ENCODE measurements at regions of chr3 and their contacts with region 1.

Region 1: GRCh38 chr3:115147329-115148141 is 447 bp upstream of the ZBTB20 start:
- DNase-seq: peak; percentile 81
- ATAC-seq: peak; percentile 77
- H3K4me3 Mint-ChIP-seq: peak overlapping the region; percentile 94
- H3K27ac Mint-ChIP-seq: peak overlapping the region; percentile 98
- H3K4me1 Mint-ChIP-seq: peaks cover 34% of the 10 kb centered on the region
- H3K27me3 Mint-ChIP-seq: no peaks in the 10 kb centered on the region
- CTCF ChIP-seq: no peak

Region 2: GRCh38 chr3:113696658-113697499 is 1450.7 kb before region 1 on chr3:
- CTCF ChIA-PET with region 1: no interaction called
- POLR2A ChIA-PET with region 1: no interaction called
- intact Hi-C with region 1: loop called (anchors 1 kb)
- DNase-seq: peak; percentile 95
- ATAC-seq: peak; percentile 89
- H3K4me3 Mint-ChIP-seq: no peak overlapping the region
- H3K27ac Mint-ChIP-seq: no peak overlapping the region
- H3K4me1 Mint-ChIP-seq: peaks cover 29% of the 10 kb centered on the region
- H3K27me3 Mint-ChIP-seq: no peaks in the 10 kb centered on the region
- CTCF ChIP-seq: no peak

Region 3: GRCh38 chr3:114519415-114519814 is 628.1 kb before region 1 on chr3:
- CTCF ChIA-PET with region 1: no interaction called
- POLR2A ChIA-PET with region 1: no interaction called
- intact Hi-C with region 1: loop called (anchors 2 kb)
- DNase-seq: peak; percentile 21
- ATAC-seq: peak; percentile 97
- H3K4me3 Mint-ChIP-seq: no peak overlapping the region
- H3K27ac Mint-ChIP-seq: no peak overlapping the region
- H3K4me1 Mint-ChIP-seq: no peaks in the 10 kb centered on the region
- H3K27me3 Mint-ChIP-seq: no peaks in the 10 kb centered on the region
- CTCF ChIP-seq: no peak

Region 4: DNA sequence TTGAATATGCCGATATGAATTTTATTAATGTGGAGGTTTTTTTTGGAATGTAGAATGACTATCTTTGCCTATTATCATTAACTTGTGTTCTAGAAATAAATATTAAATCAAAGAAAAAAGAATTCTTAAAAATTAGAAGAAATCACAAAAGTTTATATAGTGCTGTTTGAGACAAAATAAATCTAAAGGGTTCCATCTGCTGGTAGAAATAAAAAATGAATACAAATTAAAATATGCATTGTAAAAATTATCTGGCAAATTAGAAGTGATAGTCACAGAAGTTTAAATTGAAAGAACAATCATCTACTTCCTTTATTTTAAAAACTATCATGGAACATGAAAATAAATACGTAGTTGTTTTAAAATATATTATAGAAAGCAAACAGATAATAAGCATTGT is 22.3 kb after region 1 on chr3:
- CTCF ChIA-PET with region 1: no interaction called
- POLR2A ChIA-PET with region 1: interaction called, 18 read pairs
- intact Hi-C with region 1: loop called (anchors 2 kb)
- DNase-seq: no peak
- ATAC-seq: no peak
- H3K4me3 Mint-ChIP-seq: no peak overlapping the region
- H3K27ac Mint-ChIP-seq: no peak overlapping the region
- H3K4me1 Mint-ChIP-seq: peaks cover 7% of the 10 kb centered on the region
- H3K27me3 Mint-ChIP-seq: no peaks in the 10 kb centered on the region
- CTCF ChIP-seq: no peak

Region 5: DNA sequence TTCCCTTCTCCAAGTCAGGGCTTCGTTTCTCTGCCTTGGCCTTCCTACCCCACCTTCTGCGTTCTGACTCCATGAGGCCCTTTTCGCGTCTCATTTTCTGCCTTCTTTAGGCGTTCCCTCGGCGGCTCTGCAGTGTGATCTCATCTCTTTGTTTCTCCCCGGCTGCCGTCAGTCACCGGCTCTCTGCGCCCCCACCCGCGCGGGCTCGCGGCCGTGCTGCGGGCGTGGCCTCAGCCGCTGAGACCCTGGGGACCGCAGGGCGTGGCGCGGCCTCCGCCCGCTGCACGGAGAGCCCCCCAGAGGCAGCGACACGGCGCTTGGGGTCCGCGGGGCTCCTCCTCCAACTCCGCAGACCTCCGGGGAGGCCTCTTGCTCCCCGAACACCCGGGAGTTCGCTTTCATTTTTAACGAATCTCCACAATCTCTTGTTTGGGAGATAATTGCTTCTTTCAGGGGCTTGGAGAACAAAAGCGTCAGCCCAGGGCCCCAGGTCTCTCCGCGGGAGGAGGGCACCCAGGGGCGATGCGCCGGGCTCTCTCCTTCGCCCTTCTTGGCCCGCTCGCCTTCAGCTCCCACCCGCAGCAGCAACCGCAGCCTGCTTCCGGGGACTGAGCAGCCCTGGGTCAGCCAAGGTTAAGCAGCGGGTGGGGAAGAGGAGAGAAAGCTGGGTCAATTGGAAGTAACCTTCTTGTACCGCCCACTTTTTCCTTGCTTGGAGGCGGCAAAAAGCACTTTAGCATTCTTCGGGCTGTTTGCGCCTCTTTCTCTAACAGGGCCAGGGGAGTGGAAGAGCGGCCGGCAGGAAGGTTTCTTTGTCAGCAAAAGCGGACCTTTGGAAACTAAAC is 511.0 kb after region 1 on chr3:
- CTCF ChIA-PET with region 1: no interaction called
- POLR2A ChIA-PET with region 1: interaction called, 7 read pairs
- intact Hi-C with region 1: loop called (anchors 1 kb)
- DNase-seq: peak; percentile 80
- ATAC-seq: peak; percentile 94
- H3K4me3 Mint-ChIP-seq: peak overlapping the region; percentile 94
- H3K27ac Mint-ChIP-seq: peak overlapping the region; percentile 99
- H3K4me1 Mint-ChIP-seq: peaks cover 45% of the 10 kb centered on the region
- H3K27me3 Mint-ChIP-seq: no peaks in the 10 kb centered on the region
- CTCF ChIP-seq: no peak

Measured in activated B cell treated with CpG ODN at 0.5 μM for 24 hours (primary cell).